Ascending aorta (tissue), 2 donors: ENCODE measurements at regions of chr6 and their contacts with region 1.

Region 1: GRCh38 chr6:125974214-125974866 is 12.0 kb upstream of the TRMT11 start:
- DNase-seq: no peak
- H3K4me3 ChIP-seq: no peak overlapping the region
- H3K27ac ChIP-seq: no peak overlapping the region
- H3K4me1 ChIP-seq: no peaks in the 10 kb centered on the region
- H3K27me3 ChIP-seq: no peaks in the 10 kb centered on the region
- CTCF ChIP-seq: peak; percentile 13 to 54 (median 18)

Region 2: DNA sequence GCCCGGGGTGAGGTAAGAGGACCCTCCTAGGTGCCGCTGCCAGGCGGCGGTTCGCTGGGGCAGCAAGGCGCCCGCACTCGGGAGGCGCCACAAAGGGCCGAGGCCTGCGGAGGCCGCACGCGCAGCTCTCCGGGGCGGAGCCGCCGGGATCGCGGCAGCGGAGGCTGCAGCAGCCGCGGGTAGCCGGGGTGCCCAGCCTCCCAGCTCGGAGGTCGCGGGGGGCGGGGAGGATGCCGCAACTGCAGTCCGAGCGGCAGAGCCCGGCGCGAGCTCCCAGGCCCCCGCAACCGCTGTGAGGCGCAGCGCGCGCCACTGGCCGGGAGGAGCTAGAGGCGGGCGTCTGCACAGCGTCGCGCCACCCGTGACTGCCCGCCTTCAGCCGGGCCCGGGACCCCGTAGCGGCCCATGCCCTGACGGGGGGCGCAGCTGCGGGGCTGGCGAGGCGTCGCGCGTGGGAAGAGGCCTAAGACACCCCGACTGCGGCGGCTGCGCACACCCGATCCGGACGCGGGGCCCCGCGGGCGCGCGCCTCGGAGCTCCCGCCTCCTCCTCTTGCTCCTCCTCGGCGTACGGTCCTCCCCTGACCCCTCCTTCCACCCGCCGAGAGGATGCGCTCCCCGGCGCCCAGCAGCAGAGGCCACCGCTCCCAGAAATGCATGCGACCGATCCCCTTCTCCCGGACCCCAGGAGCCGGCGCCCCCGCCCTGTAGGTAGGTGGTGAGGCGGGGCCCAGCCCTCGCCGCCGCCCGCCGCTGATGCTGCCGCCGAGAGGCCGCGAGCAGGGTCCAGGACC is 183.8 kb before region 1 on chr6 and contains the start of gene NCOA7:
- intact Hi-C with region 1: loop called (anchors 5 kb)
- DNase-seq: peak; percentile 51 to 87
- H3K4me3 ChIP-seq: peak within 1 kb of the TSS; percentile 90 to 91
- H3K27ac ChIP-seq: peak within 1 kb of the TSS; percentile 91 to 99
- H3K4me1 ChIP-seq: peaks cover 0 to 15% of the 10 kb centered on the region in 2 donors
- H3K27me3 ChIP-seq: no peaks in the 10 kb centered on the region
- CTCF ChIP-seq: no peak
- total RNA-seq, gene NCOA7: 37.4 TPM

Region 3: DNA sequence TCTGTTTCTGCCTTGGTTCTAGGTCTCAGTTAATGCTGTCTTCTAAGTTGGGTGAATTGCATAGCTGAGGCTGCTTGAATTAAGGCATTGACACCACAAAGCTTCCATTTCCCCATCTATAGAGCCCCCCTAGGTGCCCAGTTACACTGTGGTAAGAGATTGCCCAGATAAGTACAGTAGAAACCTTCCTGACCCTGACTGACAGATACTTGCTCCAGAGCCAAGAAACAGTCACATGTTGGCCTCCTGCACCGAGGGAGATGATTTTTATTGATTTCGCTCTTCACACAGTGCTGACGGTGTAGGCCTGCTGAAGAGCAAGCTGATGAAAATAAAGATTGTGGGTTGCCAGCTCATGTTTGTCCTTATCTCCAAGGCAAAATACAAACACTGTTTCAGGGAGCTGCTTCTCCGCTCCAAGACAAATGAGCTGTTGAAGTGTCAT is 79.9 kb after region 1 on chr6:
- intact Hi-C with region 1: no loop called
- DNase-seq: no peak
- H3K4me3 ChIP-seq: no peak overlapping the region
- H3K27ac ChIP-seq: no peak overlapping the region
- H3K4me1 ChIP-seq: no peaks in the 10 kb centered on the region
- H3K27me3 ChIP-seq: no peaks in the 10 kb centered on the region
- CTCF ChIP-seq: no peak